Ovary (tissue), 10 donors: ENCODE measurements at regions of chr5 and their contacts with region 1.

Region 1: GRCh38 chr5:158174918-158175851 is 316.2 kb upstream of the CLINT1 start:
- DNase-seq: peak; percentile 83 to 90 (median 83)
- H3K4me3 ChIP-seq: no peak overlapping the region
- H3K27ac ChIP-seq: peak overlapping the region in 1 of 2 donors; percentile 1
- H3K4me1 ChIP-seq: peaks cover 4% of the 10 kb centered on the region
- H3K27me3 ChIP-seq: no peaks in the 10 kb centered on the region
- CTCF ChIP-seq: peak; percentile 58 to 91 (median 78)
- EP300 ChIP-seq: no peak
- POLR2A ChIP-seq: no peak

Region 2: GRCh38 chr5:158521995-158522394 is 346.8 kb after region 1 on chr5:
- intact Hi-C with region 1: no loop called
- DNase-seq: no peak
- H3K4me3 ChIP-seq: no peak overlapping the region
- H3K27ac ChIP-seq: no peak overlapping the region
- H3K4me1 ChIP-seq: peaks cover 2% of the 10 kb centered on the region
- H3K27me3 ChIP-seq: no peaks in the 10 kb centered on the region
- CTCF ChIP-seq: no peak
- EP300 ChIP-seq: no peak
- POLR2A ChIP-seq: no peak

Region 3: DNA sequence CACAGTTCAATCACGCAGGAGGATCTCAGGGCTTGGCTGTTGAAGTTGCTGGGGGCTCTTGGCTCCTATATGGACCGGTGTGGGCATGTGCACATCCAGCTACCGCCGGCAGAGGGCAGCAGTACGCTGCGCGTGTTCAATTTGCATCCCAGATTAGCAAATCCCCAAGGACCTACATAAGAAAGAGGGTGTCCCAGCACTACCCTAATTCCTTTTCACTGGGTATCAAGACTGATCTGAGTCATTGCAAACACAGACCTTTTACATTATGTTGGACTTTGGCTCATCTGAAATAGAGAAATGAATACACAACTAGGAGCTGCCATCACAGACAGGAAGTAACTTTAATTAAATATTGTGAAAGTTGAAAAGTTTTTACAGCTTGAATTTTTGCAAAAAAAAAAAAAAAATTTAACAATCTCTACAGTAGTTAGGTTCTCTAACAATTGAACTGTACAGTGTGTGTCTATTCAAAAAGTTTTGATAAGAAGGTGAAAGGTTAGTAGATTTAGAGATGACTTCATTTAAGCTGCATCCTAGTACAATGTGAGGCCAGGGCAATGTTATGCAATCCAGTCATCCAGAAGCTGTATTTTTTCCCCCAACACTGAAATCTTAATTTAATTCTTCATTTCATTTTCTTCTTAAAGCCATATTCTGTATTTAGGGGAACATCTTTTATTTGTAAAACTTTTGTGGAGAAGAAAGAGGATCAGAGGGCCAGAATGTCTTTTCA is 520.6 kb after region 1 on chr5:
- intact Hi-C with region 1: loop called in 3 of 4 experiments (anchors 5 to 10 kb)
- DNase-seq: peak; percentile 66 to 87 (median 83)
- H3K4me3 ChIP-seq: no peak overlapping the region
- H3K27ac ChIP-seq: no peak overlapping the region
- H3K4me1 ChIP-seq: peaks cover 10% of the 10 kb centered on the region
- H3K27me3 ChIP-seq: no peaks in the 10 kb centered on the region
- CTCF ChIP-seq: peak; percentile 82 to 96 (median 91)
- EP300 ChIP-seq: no peak
- POLR2A ChIP-seq: no peak